Activated CD4-positive, alpha-beta T cell treated with anti-CD3 and anti-CD28 coated beads, Interleukin-2, amount 10 ng/mL, durations not matched to agents 7 days and 5 days (primary cell): ENCODE measurements at regions of chr4 and their contacts with region 1.

Region 1: DNA sequence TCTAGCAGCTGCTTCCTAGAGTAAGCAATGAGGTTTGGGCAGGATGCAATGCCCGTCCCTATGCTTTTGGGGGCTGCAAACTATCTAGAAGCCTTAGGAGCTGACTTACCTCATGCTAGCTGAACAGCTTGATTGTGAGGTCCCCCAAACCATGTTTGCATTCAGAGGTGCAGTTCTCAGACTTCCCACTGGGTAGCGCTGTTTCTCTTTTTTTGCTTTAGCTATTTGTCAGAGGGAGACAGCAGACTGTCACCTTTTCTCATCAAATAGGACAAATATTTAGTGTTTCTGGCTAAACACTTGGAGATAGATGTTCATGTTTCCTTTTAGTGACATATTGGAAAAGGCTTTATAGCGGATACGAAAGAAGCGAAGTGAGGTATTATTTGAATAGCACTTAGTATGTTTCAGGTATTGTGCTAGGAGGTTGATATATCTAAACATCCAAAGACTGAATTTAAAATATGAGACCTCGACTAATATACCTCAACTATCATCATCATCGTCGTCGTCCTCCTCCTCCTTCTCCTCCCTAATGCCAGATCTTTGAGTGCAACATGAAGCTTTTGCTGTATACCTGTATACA is 18.7 kb upstream of the TMEM192 start:
- DNase-seq: peak; percentile 83
- H3K4me3 Mint-ChIP-seq: no peak overlapping the region
- H3K27ac Mint-ChIP-seq: no peak overlapping the region
- H3K4me1 Mint-ChIP-seq: peaks cover 15% of the 10 kb centered on the region
- H3K27me3 Mint-ChIP-seq: peaks cover 14% of the 10 kb centered on the region

Region 2: DNA sequence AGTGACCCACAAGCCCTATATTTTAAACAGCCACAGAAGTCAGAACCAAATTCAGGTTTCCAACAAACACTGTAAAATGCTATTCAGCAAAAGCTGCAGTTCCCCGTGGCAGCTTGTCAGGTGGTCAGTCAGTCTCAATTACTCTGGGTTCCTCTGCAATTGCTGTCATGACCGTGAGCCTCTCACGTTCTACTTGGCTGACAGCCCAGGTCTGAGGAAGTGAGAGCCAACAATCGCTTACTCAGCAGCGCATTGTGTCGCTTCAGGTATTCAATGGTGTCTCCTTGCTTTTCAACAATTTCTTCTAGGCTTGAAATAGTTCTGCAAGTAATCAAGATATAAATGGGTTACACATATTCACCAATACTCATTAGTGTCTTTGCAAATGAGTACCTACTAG is 51.9 kb before region 1 on chr4:
- CTCF ChIA-PET with region 1: no interaction called
- POLR2A ChIA-PET with region 1: no interaction called
- DNase-seq: no peak
- H3K4me3 Mint-ChIP-seq: no peak overlapping the region
- H3K27ac Mint-ChIP-seq: no peak overlapping the region
- H3K4me1 Mint-ChIP-seq: peaks cover 7% of the 10 kb centered on the region
- H3K27me3 Mint-ChIP-seq: no peaks in the 10 kb centered on the region

Region 3: DNA sequence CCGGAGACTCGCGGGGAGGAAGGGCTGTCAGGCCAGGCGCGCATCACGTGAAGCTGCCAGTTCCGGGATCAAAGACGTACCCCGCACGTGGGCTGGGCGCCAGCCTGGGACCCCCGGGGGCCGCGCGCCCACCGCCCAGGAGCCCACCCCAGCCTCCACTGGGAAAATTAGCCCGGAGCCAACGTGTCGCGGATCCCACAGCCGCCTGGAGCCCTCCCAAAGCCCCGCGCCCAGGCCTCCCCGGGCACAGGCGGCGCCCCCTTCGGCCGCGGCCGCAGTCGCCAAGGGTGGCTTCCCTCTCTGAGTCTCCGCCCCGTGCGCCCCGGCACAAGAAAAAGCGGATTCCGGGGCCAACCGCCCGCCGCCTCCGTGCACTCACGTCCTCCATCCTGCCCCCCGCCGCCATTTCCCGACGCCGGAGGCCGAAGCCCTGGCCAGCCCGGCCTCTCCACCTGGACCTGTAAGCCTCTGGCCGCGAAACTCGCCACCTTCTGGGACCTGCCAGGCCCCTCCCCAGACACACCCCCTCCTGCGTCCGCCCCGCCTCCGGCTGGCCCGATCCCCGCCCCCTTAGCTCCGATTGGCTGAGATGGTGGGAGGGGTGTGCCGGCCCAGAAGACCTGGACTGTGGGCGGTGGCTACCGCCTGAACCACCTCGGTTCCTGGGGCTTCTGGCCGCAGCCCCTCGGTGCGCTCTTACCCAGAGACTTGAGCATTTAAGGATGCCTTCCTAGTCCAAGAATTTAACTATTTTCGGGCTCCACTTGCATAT is 18.8 kb before region 1 on chr4 and contains the start of gene TMEM192:
- CTCF ChIA-PET with region 1: interaction called, 10 read pairs
- POLR2A ChIA-PET with region 1: no interaction called
- DNase-seq: peak; percentile 90
- H3K4me3 Mint-ChIP-seq: peak within 1 kb of the TSS; percentile 94
- H3K27ac Mint-ChIP-seq: peak within 1 kb of the TSS; percentile 90
- H3K4me1 Mint-ChIP-seq: peaks cover 23% of the 10 kb centered on the region
- H3K27me3 Mint-ChIP-seq: no peaks in the 10 kb centered on the region
- total RNA-seq, gene TMEM192: 7.0 to 8.1 TPM

Region 4: DNA sequence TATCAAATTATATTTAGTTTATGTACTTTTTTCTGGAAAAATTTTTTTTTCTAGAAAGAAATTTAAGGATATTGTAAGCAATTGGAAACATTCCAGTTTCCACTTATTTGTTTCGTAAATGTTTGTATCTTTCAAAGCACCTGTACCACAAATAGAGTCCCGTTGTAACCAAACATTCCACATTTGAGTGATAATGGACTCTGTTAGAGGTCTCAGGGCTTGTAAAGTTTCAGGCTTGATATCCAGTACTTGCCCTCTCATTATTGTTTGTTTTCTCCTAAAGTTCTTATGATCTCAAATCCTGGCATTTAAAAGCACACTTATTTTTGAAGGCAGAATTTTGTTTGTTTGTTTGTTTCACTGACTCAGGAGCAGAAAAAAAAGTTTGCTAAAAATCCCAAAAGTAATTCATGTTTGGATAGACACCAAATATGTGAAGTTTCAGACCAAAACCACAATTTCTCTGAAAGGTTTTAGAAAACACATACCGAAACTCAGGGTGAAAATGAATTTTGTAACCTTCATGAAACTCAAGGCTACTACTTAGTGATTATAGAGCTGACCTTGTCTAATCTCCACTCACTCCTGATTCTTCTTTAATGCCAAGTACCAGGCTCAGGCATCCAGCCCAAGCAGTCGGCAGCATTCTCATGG is 13.0 kb before region 1 on chr4:
- CTCF ChIA-PET with region 1: interaction called, 15 read pairs
- POLR2A ChIA-PET with region 1: no interaction called
- DNase-seq: no peak
- H3K4me3 Mint-ChIP-seq: no peak overlapping the region
- H3K27ac Mint-ChIP-seq: no peak overlapping the region
- H3K4me1 Mint-ChIP-seq: peaks cover 11% of the 10 kb centered on the region
- H3K27me3 Mint-ChIP-seq: peaks cover 7% of the 10 kb centered on the region

Region 5: GRCh38 chr4:165152527-165152926 is 21.2 kb after region 1 on chr4:
- CTCF ChIA-PET with region 1: no interaction called
- POLR2A ChIA-PET with region 1: no interaction called
- DNase-seq: no peak
- H3K4me3 Mint-ChIP-seq: no peak overlapping the region
- H3K27ac Mint-ChIP-seq: no peak overlapping the region
- H3K4me1 Mint-ChIP-seq: no peaks in the 10 kb centered on the region
- H3K27me3 Mint-ChIP-seq: peaks cover 11% of the 10 kb centered on the region

Region 6: DNA sequence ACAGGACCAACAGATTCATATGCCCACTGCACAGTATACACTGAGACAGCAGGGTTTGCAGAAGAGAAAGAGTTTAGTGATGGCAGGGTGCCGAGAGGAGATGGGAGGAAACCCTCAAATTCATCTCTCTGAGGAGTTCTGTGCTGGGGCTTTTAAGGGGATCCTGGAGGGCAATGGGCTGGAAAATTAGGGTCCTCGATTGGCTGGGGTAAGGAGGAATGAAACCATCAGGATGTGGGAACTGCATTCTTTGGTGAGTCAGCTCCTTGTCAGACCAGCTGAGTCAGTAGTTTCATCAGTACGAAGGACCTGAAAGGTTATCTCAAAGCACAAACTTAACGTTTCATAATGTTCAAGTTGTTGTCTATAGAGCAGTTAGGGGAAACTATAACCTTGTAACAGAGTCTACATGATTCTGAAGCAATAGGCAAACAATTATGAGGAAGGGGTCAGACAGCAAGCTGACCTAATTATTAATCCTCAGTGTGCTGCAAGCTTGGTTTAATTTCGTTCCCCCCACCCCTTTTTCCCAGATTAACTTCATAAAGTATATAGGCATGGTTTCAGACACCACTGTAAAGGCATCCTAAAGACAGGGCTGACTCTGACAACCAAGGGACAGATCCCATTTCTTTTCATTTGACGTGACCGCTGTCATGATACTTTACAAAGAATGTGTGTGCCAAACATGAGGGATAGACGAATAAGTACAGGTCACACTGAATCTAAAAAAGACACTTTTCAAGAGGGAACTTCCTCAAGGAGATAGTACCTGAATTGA is 194.6 kb after region 1 on chr4:
- CTCF ChIA-PET with region 1: interaction called, 12 read pairs
- POLR2A ChIA-PET with region 1: no interaction called
- DNase-seq: no peak
- H3K4me3 Mint-ChIP-seq: no peak overlapping the region
- H3K27ac Mint-ChIP-seq: no peak overlapping the region
- H3K4me1 Mint-ChIP-seq: peaks cover 11% of the 10 kb centered on the region
- H3K27me3 Mint-ChIP-seq: no peaks in the 10 kb centered on the region

Region 7: DNA sequence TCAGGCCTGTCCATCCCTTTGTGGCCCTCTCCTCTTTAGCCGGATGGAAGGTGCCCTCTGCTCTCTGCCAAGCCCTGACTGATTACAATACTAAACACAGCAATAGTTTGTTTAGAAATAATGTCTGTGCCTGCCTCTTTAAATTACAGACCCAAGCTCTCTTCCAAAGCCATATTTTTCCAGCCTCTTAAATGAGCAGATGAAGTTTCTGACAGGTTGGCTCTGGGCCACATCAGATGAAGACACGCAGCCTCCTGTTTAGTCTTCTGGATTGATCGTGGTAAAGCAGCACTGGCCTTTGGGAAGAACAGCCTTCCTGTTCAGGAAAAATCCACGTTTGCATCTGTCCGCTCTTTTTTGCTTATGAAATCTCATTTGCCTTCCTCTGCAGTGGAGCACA is 381.1 kb after region 1 on chr4:
- CTCF ChIA-PET with region 1: no interaction called
- POLR2A ChIA-PET with region 1: no interaction called
- DNase-seq: no peak
- H3K4me3 Mint-ChIP-seq: no peak overlapping the region
- H3K27ac Mint-ChIP-seq: no peak overlapping the region
- H3K4me1 Mint-ChIP-seq: no peaks in the 10 kb centered on the region
- H3K27me3 Mint-ChIP-seq: peaks cover 3% of the 10 kb centered on the region

Region 8: DNA sequence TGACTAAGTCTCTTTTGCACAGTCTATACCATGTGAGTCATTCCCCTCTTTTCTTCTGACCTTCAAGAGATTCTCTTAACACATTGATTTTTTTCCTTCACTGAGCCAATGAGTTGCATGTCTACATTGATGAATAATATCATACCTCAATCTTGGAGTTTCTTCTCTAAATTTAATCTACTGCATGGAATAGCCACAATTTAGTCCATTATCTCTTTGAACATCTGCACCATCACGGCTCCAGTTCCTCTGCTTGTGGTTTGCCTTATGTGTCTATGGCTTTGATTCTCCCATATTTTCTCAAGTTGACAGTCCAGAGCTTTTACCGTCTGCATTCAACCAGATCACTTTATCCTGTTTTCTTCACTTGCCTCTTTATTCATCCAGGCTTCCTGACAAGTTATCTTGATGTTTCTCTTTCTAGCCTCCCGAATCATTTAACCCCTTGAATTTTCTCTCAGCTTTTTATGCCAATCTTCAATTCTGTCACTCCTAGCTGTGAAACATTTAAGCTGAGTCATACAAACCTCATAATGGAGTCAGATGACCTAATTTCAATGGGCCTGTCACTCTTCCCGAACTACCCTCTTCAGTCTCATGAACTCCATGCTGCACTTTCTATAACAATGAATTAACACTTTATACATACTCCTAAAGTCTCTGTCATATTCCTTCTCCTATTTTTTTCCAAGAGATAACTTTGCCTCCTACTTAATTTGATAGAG is 469.8 kb after region 1 on chr4:
- CTCF ChIA-PET with region 1: no interaction called
- POLR2A ChIA-PET with region 1: no interaction called
- DNase-seq: no peak
- H3K4me3 Mint-ChIP-seq: no peak overlapping the region
- H3K27ac Mint-ChIP-seq: no peak overlapping the region
- H3K4me1 Mint-ChIP-seq: no peaks in the 10 kb centered on the region
- H3K27me3 Mint-ChIP-seq: no peaks in the 10 kb centered on the region